ENCODE measurements at regions of chr21 and their contacts with region 1.

Region 1: DNA sequence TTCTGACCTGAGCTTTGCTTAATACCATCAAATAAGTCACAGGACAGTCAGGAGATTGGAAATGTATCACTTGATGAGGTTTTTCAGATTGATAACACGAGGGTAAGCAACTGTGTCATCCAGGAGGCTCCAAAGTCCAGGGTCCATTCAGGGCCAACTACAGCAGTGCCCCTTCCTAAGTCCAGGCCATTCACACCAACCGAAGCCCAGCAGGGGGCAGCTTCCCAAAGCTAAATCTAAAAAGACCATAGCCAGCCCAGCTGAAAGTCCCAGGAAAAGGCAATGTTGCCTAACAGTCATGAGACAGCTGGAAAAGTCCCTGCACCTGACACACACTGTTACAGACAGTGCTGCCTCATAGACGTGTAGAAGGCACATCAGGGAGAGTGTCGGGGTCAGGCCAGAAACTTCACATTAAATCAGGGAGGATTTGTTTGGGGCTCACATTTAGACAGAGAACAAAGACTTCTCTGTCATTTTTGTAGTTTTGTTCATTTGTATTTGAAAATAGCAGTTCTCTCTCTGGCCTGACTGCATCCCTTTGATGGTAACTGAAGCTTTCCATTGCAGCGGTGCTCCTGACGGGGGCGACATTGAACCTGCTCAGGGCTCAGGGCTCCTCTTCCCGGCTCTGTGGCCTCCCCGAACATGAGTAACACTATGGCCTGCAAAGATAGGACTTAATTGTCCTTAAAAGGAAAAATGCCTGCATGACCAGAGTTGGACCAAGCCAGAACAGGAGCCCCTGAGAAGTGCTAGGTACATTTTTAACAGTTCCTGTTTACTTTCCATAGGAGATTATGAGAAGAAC is 200.4 kb downstream of the NRIP1 start:
- DNase-seq: peak; percentile 46 to 81 (median 57)
- ATAC-seq: peak; percentile 96
- H3K4me3 ChIP-seq: no peak overlapping the region
- H3K27ac ChIP-seq: no peak overlapping the region
- H3K4me1 ChIP-seq: peaks cover 0 to 16% of the 10 kb centered on the region in 2 experiments; a peak in 2 of 5 replicates
- H3K27me3 ChIP-seq: no peaks in the 10 kb centered on the region
- CTCF ChIP-seq: peak; percentile 73 to 82 (median 75)
- EP300 ChIP-seq: peak; percentile 4; the same call in 1 of the 2 replicates
- POLR2A ChIP-seq: no peak
- RAD21 ChIP-seq: peak; percentile 45 to 82

Region 2: DNA sequence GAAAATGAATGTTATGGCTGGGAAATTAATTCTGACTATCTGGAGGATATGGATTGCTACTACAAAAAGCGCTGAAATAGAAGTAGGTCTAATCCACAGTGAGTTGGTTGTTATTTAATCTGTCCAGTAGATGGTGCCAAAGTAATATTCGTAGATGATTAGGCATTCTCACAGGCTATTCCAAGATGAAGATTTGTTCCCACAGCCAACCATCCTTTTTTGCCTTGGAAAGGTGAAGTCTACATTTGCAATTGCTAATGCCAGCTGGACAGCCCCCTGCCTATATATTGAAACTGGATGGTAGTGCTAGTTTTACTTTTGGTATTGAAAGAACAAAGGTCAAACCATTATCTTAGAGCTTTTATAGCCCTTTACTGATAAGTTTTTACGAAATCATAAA is 604.7 kb before region 1 on chr21:
- CTCF ChIA-PET with region 1: no interaction called
- POLR2A ChIA-PET with region 1: no interaction called
- in situ Hi-C with region 1: no loop called
- intact Hi-C with region 1: loop called (anchors 10 kb)
- DNase-seq: peak; percentile 24 to 72 (median 34)
- ATAC-seq: peak; percentile 92
- H3K4me3 ChIP-seq: no peak overlapping the region
- H3K27ac ChIP-seq: no peak overlapping the region
- H3K4me1 ChIP-seq: no peaks in the 10 kb centered on the region; a peak in 1 of 5 replicates
- H3K27me3 ChIP-seq: no peaks in the 10 kb centered on the region
- CTCF ChIP-seq: peak; percentile 48 to 78 (median 63); a peak in 5 of 6 replicates
- EP300 ChIP-seq: no peak
- POLR2A ChIP-seq: no peak
- RAD21 ChIP-seq: peak; percentile 81 to 92

Region 3: GRCh38 chr21:14306151-14306907 is 558.1 kb before region 1 on chr21:
- CTCF ChIA-PET with region 1: no interaction called
- POLR2A ChIA-PET with region 1: no interaction called
- in situ Hi-C with region 1: no loop called
- intact Hi-C with region 1: loop called (anchors 10 kb)
- DNase-seq: peak in 1 of 4 experiments; percentile 26
- ATAC-seq: 0 out of 3 replicates have a peak, but pooled peaks have one; percentile 28
- H3K4me3 ChIP-seq: no peak overlapping the region
- H3K27ac ChIP-seq: no peak overlapping the region
- H3K4me1 ChIP-seq: no peaks in the 10 kb centered on the region
- H3K27me3 ChIP-seq: no peaks in the 10 kb centered on the region; a peak in 1 of 5 replicates
- CTCF ChIP-seq: peak in 2 of 3 experiments; percentile 21 to 62; a peak in 4 of 6 replicates
- EP300 ChIP-seq: no peak
- POLR2A ChIP-seq: no peak
- RAD21 ChIP-seq: peak; percentile 47 to 76; a peak in 3 of 4 replicates

Region 4: GRCh38 chr21:14403681-14404318 is 460.6 kb before region 1 on chr21:
- CTCF ChIA-PET with region 1: interaction called, 3 read pairs
- POLR2A ChIA-PET with region 1: no interaction called
- in situ Hi-C with region 1: no loop called
- intact Hi-C with region 1: loop called (anchors 5 kb)
- DNase-seq: peak; percentile 31 to 68 (median 42)
- ATAC-seq: peak; percentile 91
- H3K4me3 ChIP-seq: no peak overlapping the region
- H3K27ac ChIP-seq: no peak overlapping the region
- H3K4me1 ChIP-seq: no peaks in the 10 kb centered on the region; a peak in 1 of 5 replicates
- H3K27me3 ChIP-seq: no peaks in the 10 kb centered on the region
- CTCF ChIP-seq: peak; percentile 53 to 81 (median 54)
- EP300 ChIP-seq: no peak
- POLR2A ChIP-seq: no peak
- RAD21 ChIP-seq: peak; percentile 82 to 91

Region 5: DNA sequence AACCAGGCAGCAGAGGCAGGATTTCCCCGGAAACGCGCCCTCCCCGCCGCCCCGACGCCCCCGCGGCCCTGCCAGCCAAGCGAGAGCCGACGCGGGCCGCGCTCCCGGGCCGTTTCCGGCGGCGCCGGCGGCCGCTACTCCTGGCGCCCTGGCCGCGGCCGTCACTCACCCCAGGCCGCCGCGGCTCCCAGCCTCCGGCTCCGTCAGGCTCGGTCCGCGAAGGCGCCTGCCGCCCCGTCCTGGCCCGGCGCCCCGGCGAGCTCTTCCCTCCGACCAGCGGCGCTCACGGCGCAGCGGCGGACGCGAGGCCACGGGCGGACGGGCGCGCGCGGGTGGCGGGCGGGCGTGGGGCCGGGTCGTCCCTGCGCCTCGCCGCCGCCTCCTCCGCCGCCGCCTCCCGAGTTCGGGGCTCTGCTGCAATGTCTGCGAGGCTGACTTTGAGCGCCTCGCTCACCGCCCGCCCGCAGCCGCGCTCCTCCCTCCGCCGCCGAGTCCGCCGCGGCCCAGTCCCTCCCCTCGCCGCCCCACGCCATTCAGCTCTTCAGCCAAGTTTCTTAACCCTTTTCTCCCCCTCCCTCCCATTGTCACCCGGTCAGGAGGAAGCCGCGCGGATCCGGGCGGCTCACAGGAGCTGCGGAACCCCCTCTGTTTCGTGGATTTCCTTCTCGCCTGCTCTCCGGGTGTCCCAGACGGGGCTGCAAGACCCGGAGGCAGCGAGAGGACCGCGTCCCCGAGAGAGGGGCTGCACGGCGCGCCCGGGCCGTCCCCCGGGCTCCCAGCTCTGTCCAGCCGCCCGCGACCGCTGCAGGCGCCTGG is 200.4 kb after region 1 on chr21 and contains the start of gene NRIP1:
- CTCF ChIA-PET with region 1: no interaction called
- POLR2A ChIA-PET with region 1: no interaction called
- in situ Hi-C with region 1: no loop called
- intact Hi-C with region 1: loop called (anchors 5 kb)
- DNase-seq: peak; percentile 77 to 91 (median 83)
- ATAC-seq: peak; percentile 81
- H3K4me3 ChIP-seq: peak within 1 kb of the TSS; percentile 80
- H3K27ac ChIP-seq: peak within 1 kb of the TSS; percentile 85
- H3K4me1 ChIP-seq: peaks cover 12% of the 10 kb centered on the region in 2 experiments; a peak in 4 of 5 replicates
- H3K27me3 ChIP-seq: no peaks in the 10 kb centered on the region
- CTCF ChIP-seq: no peak
- EP300 ChIP-seq: no peak
- POLR2A ChIP-seq: peak; percentile 61
- RAD21 ChIP-seq: no peak
- polyA plus RNA-seq, gene NRIP1: 4.3 to 6.3 TPM

Region 6: DNA sequence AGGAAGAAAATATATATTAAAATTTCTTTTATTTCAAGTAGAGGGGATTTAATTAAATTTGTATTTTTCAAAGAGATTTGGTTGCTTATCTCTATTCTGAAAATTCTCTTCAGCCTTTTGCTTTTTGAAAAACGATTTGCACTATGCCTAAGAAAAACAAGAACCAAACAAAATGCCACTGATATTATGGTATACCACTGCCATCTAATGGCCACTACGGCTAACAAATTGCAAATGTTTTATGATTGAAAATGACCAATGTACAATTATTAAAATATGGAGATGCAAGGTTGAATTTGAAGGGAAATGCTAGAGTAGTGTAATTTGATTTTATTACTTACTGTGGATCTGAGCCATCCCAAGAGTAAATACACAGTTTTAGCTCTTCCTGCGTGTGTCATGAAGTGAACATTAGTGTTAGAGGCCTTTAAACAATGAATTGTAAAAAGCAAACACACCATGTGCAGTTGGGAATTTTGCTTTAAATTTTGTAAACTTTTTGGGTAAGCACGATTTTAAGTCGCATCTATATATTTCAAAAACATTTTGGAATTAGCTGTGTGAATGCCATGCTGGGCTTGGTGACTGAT is 728.0 kb after region 1 on chr21:
- CTCF ChIA-PET with region 1: no interaction called
- POLR2A ChIA-PET with region 1: no interaction called
- in situ Hi-C with region 1: no loop called
- intact Hi-C with region 1: loop called (anchors 10 kb)
- DNase-seq: peak in 2 of 4 experiments; percentile 17 to 54
- ATAC-seq: no peak
- H3K4me3 ChIP-seq: no peak overlapping the region
- H3K27ac ChIP-seq: no peak overlapping the region
- H3K4me1 ChIP-seq: no peaks in the 10 kb centered on the region
- H3K27me3 ChIP-seq: no peaks in the 10 kb centered on the region
- CTCF ChIP-seq: peak; percentile 8 to 68 (median 30); a peak in 3 of 6 replicates
- EP300 ChIP-seq: no peak
- POLR2A ChIP-seq: no peak
- RAD21 ChIP-seq: peak; percentile 86 to 87

Measured in K562 (cell line).